ENCODE measurements at regions of chr7 and their contacts with region 1.

Region 1: GRCh38 chr7:98294796-98295382 is 13.4 kb downstream of the BRI3 start:
- DNase-seq: peak; percentile 82 to 87 (median 85)
- ATAC-seq: peak; percentile 97
- H3K4me3 ChIP-seq: no peak overlapping the region
- H3K27ac ChIP-seq: no peak overlapping the region
- H3K4me1 ChIP-seq: peaks cover 0 to 10% of the 10 kb centered on the region in 2 experiments; a peak in 2 of 5 replicates
- H3K27me3 ChIP-seq: peaks cover 0 to 49% of the 10 kb centered on the region in 2 experiments; a peak in 2 of 5 replicates
- CTCF ChIP-seq: peak; percentile 87 to 93 (median 91)
- EP300 ChIP-seq: no peak
- POLR2A ChIP-seq: no peak
- RAD21 ChIP-seq: peak; percentile 83 to 92

Region 2: DNA sequence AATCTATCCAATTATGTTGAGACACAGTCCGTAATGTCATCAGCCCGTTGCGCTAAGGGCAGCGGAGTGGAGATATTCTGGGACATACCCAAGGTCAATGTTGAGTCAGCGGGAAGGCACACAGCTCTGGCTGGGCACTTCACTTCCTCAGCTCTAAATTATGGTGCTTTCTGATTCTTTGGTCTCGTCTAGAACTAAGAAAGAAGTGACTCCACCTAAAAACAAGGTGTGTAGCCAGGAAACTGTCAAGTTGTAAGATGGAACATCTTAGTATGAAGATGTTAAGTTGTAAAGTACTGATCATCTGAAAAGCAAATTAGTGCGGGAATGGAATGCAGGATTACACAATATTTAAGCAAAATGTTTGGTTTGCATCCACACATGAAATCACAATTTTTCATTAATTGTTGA is 62.9 kb after region 1 on chr7:
- CTCF ChIA-PET with region 1: no interaction called
- POLR2A ChIA-PET with region 1: no interaction called
- in situ Hi-C with region 1: no loop called
- intact Hi-C with region 1: no loop called
- DNase-seq: no peak
- ATAC-seq: no peak
- H3K4me3 ChIP-seq: no peak overlapping the region
- H3K27ac ChIP-seq: no peak overlapping the region
- H3K4me1 ChIP-seq: peaks cover 11 to 21% of the 10 kb centered on the region in 2 experiments
- H3K27me3 ChIP-seq: peaks cover 0 to 6% of the 10 kb centered on the region in 2 experiments; a peak in 1 of 5 replicates
- CTCF ChIP-seq: no peak
- EP300 ChIP-seq: no peak
- POLR2A ChIP-seq: no peak
- RAD21 ChIP-seq: no peak

Region 3: DNA sequence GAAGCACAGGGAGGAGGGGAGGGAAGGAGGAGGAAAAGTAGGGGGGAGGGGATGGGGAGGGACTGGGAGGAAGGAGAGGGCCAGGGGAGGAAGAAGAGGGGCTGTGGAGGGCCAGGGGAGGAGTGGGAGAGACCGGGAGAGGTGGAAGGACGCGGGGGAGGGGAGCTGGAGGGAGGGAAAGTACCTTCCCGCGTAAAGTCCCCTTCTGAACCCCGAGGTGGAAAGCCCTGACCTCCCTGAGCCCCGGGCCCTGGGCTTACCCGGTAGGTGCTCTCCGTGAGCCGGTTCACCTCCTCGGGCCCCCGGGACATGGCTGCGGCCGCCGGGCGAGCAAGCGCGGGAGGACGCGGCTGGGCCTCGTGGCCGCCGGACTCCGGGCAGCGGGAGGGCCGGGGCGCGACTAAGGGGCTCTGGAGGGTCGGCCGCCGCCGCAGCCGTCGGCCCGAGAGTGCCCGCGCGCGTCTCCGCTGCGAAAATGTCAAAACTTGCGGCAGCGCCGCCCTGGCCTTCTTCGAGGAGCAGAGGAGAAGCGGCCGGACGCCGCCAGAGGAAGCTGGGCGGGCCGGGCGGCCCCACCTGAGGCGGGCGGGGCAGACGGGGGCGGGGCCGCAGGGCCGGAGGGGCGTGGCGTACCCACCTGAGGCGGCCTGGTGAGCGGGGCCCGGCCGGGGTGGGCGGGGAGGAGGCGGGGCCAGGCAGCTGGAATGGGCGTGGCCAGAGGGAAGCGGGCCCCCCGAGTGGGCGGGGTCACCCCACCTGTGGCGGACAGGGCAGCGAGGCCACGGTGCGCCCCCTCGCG is 105.9 kb after region 1 on chr7 and contains the start of gene BAIAP2L1:
- CTCF ChIA-PET with region 1: interaction called, 23 read pairs
- POLR2A ChIA-PET with region 1: interaction called, 3 read pairs
- in situ Hi-C with region 1: loop called (anchors 5 kb)
- intact Hi-C with region 1: loop called (anchors 1 kb)
- DNase-seq: peak; percentile 95 to 100 (median 100)
- ATAC-seq: peak; percentile 96
- H3K4me3 ChIP-seq: peak within 1 kb of the TSS; percentile 66
- H3K27ac ChIP-seq: peak within 1 kb of the TSS; percentile 88
- H3K4me1 ChIP-seq: peaks cover 8 to 13% of the 10 kb centered on the region in 2 experiments; a peak in 4 of 5 replicates
- H3K27me3 ChIP-seq: peaks cover 17 to 34% of the 10 kb centered on the region in 2 experiments
- CTCF ChIP-seq: peak in 1 of 3 experiments; percentile 84; a peak in 3 of 6 replicates
- EP300 ChIP-seq: no peak
- POLR2A ChIP-seq: peak; percentile 60; the same call in 1 of the 2 replicates
- RAD21 ChIP-seq: no peak; a peak in 2 of 4 replicates
- polyA plus RNA-seq, gene BAIAP2L1: 4.2 to 4.3 TPM

Region 4: DNA sequence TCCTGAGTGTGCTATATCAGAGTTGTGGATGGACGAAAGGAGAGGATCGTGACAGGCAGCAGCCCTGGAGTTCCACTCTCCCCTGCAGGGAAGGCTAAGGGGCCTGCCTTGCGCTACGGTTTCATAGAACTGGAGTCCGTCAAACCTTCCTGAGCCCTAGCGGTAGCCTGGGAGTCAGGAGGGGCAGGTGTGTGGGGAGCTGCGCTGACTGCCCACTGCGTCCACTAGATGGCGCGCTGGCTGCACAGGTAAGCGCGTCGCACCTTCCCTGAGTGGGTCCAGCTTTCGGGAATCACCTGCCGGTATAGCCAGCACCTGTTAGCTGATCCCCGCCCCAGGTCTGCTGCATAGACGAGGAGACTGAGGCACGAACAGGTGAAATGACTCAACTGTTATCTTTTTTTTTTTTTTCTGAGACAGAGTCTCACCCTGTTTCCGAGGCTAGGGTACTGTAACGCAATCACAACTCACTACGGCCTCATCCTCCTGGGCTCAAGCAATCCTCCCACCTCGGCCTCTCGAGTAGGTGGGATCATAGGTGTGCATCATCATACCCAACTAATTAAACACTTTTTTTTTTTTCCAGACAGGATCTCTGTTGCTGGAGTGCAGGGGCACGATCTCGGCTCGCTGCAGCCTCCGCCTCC is 126.2 kb after region 1 on chr7:
- CTCF ChIA-PET with region 1: interaction called, 3 read pairs
- POLR2A ChIA-PET with region 1: interaction called, 4 read pairs
- in situ Hi-C with region 1: no loop called
- intact Hi-C with region 1: loop called (anchors 5 kb)
- DNase-seq: peak; percentile 87 to 91 (median 90)
- ATAC-seq: peak; percentile 95
- H3K4me3 ChIP-seq: no peak overlapping the region
- H3K27ac ChIP-seq: no peak overlapping the region
- H3K4me1 ChIP-seq: peaks cover 4 to 8% of the 10 kb centered on the region in 2 experiments; a peak in 4 of 5 replicates
- H3K27me3 ChIP-seq: peaks cover 0 to 18% of the 10 kb centered on the region in 2 experiments; a peak in 1 of 5 replicates
- CTCF ChIP-seq: peak; percentile 97 to 99 (median 99)
- EP300 ChIP-seq: no peak
- POLR2A ChIP-seq: no peak
- RAD21 ChIP-seq: peak; percentile 47 to 74

Region 5: DNA sequence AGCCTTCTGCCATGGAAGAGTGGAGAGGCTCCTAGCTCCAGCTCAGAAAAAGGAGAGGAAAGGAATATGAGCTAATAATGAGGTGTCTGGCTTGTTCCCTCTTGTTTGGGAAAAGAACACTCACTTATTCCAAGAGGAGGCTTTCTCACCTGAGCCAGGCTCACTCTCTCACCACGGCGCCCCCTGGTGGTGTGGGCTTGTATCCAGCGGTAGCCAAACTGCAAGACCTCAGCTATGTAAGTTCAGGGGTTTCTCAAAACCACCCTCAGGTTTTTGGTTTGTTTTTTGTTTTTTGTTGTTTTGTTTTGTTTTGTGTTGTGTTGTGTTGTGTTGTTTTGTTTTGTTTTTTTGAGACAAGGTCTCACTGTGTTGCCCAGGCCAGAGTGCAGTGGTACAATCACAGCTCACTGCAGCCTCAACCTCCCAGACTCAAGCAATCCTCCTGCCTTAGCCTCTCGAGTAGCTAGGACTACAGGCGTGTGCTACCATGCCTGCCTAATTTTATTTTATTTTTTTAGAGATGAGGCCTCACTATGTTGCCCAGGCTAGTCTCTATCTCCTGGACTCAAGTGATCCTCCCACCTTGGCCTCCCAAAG is 450.9 kb after region 1 on chr7:
- CTCF ChIA-PET with region 1: interaction called, 3 read pairs
- POLR2A ChIA-PET with region 1: interaction called, 3 read pairs
- in situ Hi-C with region 1: loop called (anchors 10 kb)
- intact Hi-C with region 1: loop called (anchors 2 kb)
- DNase-seq: peak; percentile 78 to 88 (median 86)
- ATAC-seq: peak; percentile 96
- H3K4me3 ChIP-seq: no peak overlapping the region
- H3K27ac ChIP-seq: no peak overlapping the region
- H3K4me1 ChIP-seq: no peaks in the 10 kb centered on the region
- H3K27me3 ChIP-seq: peaks cover 16 to 39% of the 10 kb centered on the region in 2 experiments; a peak in 4 of 5 replicates
- CTCF ChIP-seq: peak; percentile 82 to 90 (median 89)
- EP300 ChIP-seq: no peak
- POLR2A ChIP-seq: no peak
- RAD21 ChIP-seq: peak; percentile 54 to 71